ENCODE measurements at regions of chr6 and their contacts with region 1.

Region 1: GRCh38 chr6:29589423-29590048 is 4.6 kb downstream of the OR2H2 start:
- DNase-seq: no peak
- H3K4me3 ChIP-seq: no peak overlapping the region
- H3K27ac ChIP-seq: no peak overlapping the region
- H3K4me1 ChIP-seq: no peaks in the 10 kb centered on the region
- H3K27me3 ChIP-seq: peaks cover 0 to 6% (median 0%) of the 10 kb centered on the region in 4 donors
- CTCF ChIP-seq: peak; percentile 82 to 93 (median 86)
- EP300 ChIP-seq: no peak
- POLR2A ChIP-seq: no peak

Region 2: DNA sequence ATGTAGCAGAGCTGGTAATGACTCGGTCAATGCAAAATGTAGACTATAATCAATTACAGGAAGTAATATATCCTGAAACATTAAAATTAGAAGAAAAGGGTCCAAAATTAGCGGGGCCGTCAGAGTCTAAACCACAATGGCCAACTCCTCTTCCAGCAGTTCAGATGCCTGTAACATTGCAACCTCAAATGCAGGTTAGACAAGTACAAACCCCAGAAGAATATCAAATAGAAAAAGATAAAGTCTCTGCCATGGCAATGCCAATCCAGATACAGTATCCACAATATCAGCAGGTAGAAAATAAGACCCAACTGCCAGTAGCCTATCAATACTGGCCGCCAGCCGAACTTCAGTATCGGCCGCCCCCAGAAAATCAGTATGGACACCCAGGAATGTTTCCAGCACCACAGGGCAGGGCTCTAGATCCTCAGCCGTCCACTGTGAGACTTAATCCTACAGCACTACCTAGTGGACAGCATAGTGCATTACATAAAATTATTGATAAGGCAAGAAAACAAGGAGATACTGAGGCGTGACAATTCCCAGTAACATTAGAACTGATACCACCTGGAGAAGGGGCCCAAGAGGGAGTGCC is 905.5 kb before region 1 on chr6:
- intact Hi-C with region 1: loop called (anchors 10 kb)
- DNase-seq: no peak
- H3K4me3 ChIP-seq: no peak overlapping the region
- H3K27ac ChIP-seq: no peak overlapping the region
- H3K4me1 ChIP-seq: peaks cover 0 to 9% (median 6%) of the 10 kb centered on the region in 4 donors
- H3K27me3 ChIP-seq: peaks cover 0 to 72% (median 3%) of the 10 kb centered on the region in 4 donors
- CTCF ChIP-seq: peak; percentile 33 to 44 (median 39)
- EP300 ChIP-seq: no peak
- POLR2A ChIP-seq: no peak